Activated CD8-positive, alpha-beta T cell treated with anti-CD3 and anti-CD28 coated beads, Interleukin-2, amount 10 ng/mL, durations not matched to agents 7 days and 5 days (primary cell): ENCODE measurements at regions of chr21 and their contacts with region 1.

Region 1: GRCh38 chr21:33199516-33200217 is 30.1 kb upstream of the IFNAR2 start:
- DNase-seq: peak; percentile 90
- ATAC-seq: peak; percentile 88
- H3K4me3 Mint-ChIP-seq: no peak overlapping the region
- H3K27ac Mint-ChIP-seq: no peak overlapping the region
- H3K4me1 Mint-ChIP-seq: peaks cover 35% of the 10 kb centered on the region
- H3K27me3 Mint-ChIP-seq: peaks cover 8% of the 10 kb centered on the region

Region 2: GRCh38 chr21:32717851-32718316 is 481.8 kb before region 1 on chr21:
- CTCF ChIA-PET with region 1: no interaction called
- POLR2A ChIA-PET with region 1: no interaction called
- DNase-seq: no peak
- ATAC-seq: no peak
- H3K4me3 Mint-ChIP-seq: no peak overlapping the region
- H3K27ac Mint-ChIP-seq: no peak overlapping the region
- H3K4me1 Mint-ChIP-seq: peaks cover 7% of the 10 kb centered on the region
- H3K27me3 Mint-ChIP-seq: no peaks in the 10 kb centered on the region

Region 3: DNA sequence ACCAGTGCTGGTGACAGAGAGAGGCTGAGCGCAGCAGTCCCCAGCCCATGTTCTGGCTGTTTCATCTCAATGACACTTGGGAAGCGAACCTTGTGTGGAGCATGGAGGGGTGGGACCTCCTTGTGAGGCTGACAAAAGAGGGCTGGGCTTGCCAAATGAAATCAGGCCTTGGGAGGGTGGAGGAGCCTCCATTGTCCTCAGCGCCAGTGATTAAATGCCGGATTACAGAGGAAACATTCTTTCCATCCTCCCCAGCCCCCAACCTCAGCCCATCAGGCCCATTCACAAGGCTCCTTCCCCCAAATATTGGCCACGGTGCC is 364.8 kb before region 1 on chr21:
- CTCF ChIA-PET with region 1: interaction called, 31 read pairs
- POLR2A ChIA-PET with region 1: interaction called, 4 read pairs
- DNase-seq: peak; percentile 5
- ATAC-seq: no peak
- H3K4me3 Mint-ChIP-seq: no peak overlapping the region
- H3K27ac Mint-ChIP-seq: no peak overlapping the region
- H3K4me1 Mint-ChIP-seq: no peaks in the 10 kb centered on the region
- H3K27me3 Mint-ChIP-seq: peaks cover 16% of the 10 kb centered on the region

Region 4: GRCh38 chr21:33069976-33070811 is 129.5 kb before region 1 on chr21 and contains the start of gene OLIG1:
- CTCF ChIA-PET with region 1: no interaction called
- POLR2A ChIA-PET with region 1: no interaction called
- DNase-seq: peak; percentile 31
- ATAC-seq: peak; percentile 64
- H3K4me3 Mint-ChIP-seq: peak within 1 kb of the TSS; percentile 71
- H3K27ac Mint-ChIP-seq: no peak within 1 kb of the TSS
- H3K4me1 Mint-ChIP-seq: peaks cover 18% of the 10 kb centered on the region
- H3K27me3 Mint-ChIP-seq: peaks cover 80% of the 10 kb centered on the region
- total RNA-seq, gene OLIG1: not detected

Region 5: GRCh38 chr21:33101300-33102005 is 98.2 kb before region 1 on chr21:
- CTCF ChIA-PET with region 1: no interaction called
- POLR2A ChIA-PET with region 1: no interaction called
- DNase-seq: no peak
- ATAC-seq: no peak
- H3K4me3 Mint-ChIP-seq: no peak overlapping the region
- H3K27ac Mint-ChIP-seq: no peak overlapping the region
- H3K4me1 Mint-ChIP-seq: no peaks in the 10 kb centered on the region
- H3K27me3 Mint-ChIP-seq: peaks cover 6% of the 10 kb centered on the region

Region 6: DNA sequence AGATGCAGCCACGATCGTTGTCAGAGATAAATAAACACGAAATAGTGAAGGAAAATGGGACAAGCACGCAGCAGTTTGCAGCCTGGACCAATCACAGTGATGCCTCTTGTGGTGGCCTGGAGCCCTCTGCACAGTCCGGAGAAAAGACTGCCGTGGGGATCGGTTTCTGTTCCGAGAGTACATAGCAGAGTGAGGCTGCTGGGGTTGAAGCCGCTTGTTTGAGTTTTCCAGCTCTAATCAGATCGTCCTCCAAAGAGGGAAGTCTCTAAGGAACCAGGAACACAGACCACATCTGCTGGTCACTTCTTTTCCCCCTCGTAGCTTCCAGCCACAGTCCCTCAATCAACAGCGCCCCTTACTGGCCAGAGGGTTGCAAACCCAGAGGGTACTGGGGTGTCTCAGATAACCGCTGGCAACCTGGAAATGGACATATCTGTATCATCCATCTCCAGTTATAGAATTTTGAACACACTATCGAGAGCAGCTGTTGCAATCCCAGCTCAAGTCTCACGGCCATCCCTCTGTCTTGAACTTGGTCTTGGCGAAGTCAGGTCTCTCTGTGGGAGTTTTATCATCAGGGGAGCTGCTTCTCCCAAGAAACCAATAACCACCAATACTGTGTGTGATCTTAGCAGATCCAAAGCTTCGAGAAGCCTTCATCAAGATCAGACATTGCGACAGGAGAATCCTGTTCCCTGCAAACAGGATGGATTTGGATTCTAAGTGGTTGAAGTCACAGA is 72.3 kb before region 1 on chr21:
- CTCF ChIA-PET with region 1: interaction called, 19 read pairs
- POLR2A ChIA-PET with region 1: no interaction called
- DNase-seq: peak; percentile 70
- ATAC-seq: peak; percentile 80
- H3K4me3 Mint-ChIP-seq: peak overlapping the region; percentile 52
- H3K27ac Mint-ChIP-seq: no peak overlapping the region
- H3K4me1 Mint-ChIP-seq: peaks cover 4% of the 10 kb centered on the region
- H3K27me3 Mint-ChIP-seq: peaks cover 32% of the 10 kb centered on the region

Region 7: DNA sequence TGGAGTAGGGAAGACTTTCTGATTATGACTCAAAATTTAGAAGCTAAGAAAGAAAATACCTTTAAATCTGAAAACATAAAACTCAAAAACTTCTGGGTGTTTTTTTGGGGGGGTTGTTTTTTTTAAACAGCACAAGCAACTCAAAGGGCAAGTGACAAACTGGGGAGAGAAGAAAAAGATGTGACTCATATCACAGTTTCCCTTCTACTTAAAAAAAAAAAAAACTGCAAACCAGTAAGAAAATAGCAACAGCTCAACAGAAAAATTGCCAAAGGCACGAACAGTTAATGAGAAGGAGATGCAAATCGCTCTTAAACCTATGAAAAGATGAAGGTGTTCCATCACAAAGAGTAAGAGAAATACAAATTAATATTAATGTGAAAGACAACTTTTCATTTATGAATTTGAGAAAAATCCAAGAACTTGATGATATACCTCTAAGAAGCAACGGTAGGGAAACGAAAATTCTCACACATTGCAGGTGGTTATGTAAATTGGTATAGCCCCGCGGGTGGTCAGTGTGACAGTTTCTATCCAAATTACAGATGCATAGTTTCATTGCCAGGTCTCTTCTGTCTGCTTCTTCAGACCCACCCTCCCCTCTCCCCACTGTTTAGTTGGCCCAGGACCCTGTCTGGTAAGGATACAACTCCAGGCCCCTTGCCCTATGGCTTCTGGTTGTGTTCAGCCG is 39.0 kb after region 1 on chr21:
- CTCF ChIA-PET with region 1: interaction called, 14 read pairs
- POLR2A ChIA-PET with region 1: interaction called, 4 read pairs
- DNase-seq: peak; percentile 23
- ATAC-seq: peak; percentile 54
- H3K4me3 Mint-ChIP-seq: peak overlapping the region; percentile 56
- H3K27ac Mint-ChIP-seq: peak overlapping the region; percentile 87
- H3K4me1 Mint-ChIP-seq: peaks cover 74% of the 10 kb centered on the region
- H3K27me3 Mint-ChIP-seq: no peaks in the 10 kb centered on the region

Region 8: DNA sequence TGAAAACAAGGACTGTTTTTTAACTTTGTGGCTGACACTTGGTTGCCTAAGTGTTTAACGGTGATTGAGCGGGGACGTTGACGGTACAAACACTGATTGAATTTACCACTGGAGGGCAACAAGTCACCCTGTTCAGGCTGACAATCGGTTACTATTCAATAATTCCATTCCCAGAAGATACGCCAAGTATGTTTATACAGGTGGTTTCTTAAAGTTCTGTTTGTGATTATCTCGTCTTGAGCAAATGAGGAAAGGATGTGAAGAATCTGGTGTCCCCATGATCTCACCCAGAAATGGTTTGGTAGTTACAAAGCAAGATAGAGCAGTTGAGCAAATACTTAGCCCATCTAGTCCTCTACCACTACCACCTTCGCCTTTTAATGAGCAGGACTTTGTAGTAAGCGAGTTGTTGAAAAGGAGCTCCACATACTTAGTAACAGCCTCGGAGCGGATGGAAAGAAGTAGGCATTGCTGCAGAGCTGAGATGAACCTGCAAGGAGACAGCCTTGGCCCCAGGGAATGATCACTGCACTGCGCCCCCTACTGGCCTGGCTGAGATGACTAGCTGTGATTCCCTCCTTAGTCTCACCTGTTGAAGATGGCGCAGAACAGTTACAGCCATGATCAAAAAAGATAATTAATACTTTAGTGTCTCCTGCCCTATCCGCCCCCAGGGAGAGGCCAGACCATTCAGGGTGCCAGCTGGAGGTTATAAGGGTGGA is 161.4 kb after region 1 on chr21:
- CTCF ChIA-PET with region 1: interaction called, 32 read pairs
- POLR2A ChIA-PET with region 1: interaction called, 6 read pairs
- DNase-seq: peak; percentile 89
- ATAC-seq: peak; percentile 81
- H3K4me3 Mint-ChIP-seq: peak overlapping the region; percentile 75
- H3K27ac Mint-ChIP-seq: peak overlapping the region; percentile 48
- H3K4me1 Mint-ChIP-seq: peaks cover 27% of the 10 kb centered on the region
- H3K27me3 Mint-ChIP-seq: no peaks in the 10 kb centered on the region

Region 9: GRCh38 chr21:33412832-33413519 is 213.3 kb after region 1 on chr21:
- CTCF ChIA-PET with region 1: interaction called, 10 read pairs
- POLR2A ChIA-PET with region 1: no interaction called
- DNase-seq: no peak
- ATAC-seq: no peak
- H3K4me3 Mint-ChIP-seq: peak overlapping the region; percentile 10
- H3K27ac Mint-ChIP-seq: peak overlapping the region; percentile 29
- H3K4me1 Mint-ChIP-seq: peaks cover 21% of the 10 kb centered on the region
- H3K27me3 Mint-ChIP-seq: peaks cover 2% of the 10 kb centered on the region

Region 10: DNA sequence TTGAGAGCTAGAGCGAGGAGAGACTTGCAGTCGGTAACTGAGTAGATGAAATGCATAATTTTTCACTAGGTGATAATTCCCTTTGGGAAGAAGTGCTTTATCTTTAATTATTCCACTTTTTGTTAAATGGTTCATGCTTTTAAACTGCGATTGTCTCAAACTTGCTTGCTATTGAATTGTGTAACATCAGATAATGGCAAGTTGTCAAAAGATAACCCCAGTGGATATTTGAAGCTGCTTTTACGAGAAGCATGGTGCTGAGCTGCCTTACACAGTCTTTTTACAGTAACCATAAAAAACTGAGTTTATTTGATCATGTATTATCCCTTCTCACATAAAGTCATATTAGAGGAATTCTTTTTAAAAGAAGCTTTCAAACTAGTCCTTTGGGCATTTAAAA is 249.9 kb after region 1 on chr21:
- CTCF ChIA-PET with region 1: interaction called, 65 read pairs
- POLR2A ChIA-PET with region 1: no interaction called
- DNase-seq: no peak
- ATAC-seq: no peak
- H3K4me3 Mint-ChIP-seq: no peak overlapping the region
- H3K27ac Mint-ChIP-seq: no peak overlapping the region
- H3K4me1 Mint-ChIP-seq: peaks cover 5% of the 10 kb centered on the region
- H3K27me3 Mint-ChIP-seq: no peaks in the 10 kb centered on the region

Region 11: GRCh38 chr21:33572350-33572749 is 372.7 kb after region 1 on chr21:
- CTCF ChIA-PET with region 1: no interaction called
- POLR2A ChIA-PET with region 1: no interaction called
- DNase-seq: no peak
- ATAC-seq: no peak
- H3K4me3 Mint-ChIP-seq: no peak overlapping the region
- H3K27ac Mint-ChIP-seq: no peak overlapping the region
- H3K4me1 Mint-ChIP-seq: no peaks in the 10 kb centered on the region
- H3K27me3 Mint-ChIP-seq: no peaks in the 10 kb centered on the region